ENCODE measurements at regions of chr18 and their contacts with region 1.

Region 1: DNA sequence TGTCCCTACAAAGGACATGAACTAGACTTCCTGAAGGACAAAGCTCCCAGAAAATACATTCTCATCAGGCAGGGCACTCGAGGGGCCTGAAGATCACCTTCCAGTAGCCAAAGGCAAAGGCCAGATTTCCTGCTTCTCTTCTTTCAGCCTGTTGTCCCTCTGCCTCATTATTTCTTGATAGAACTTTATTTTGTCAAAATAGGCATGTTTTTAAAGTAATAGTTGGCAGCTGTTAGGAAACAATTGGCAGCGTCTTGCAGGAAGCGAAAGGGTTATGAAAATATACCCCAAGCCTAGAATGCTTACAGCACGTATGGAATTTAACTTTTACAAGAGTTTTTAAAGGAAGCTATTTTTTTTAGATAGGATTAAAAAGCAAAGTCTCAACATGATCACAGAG is 74.9 kb downstream of the LINC00305 start:
- DNase-seq: no peak
- H3K4me3 ChIP-seq: no peak overlapping the region
- H3K27ac ChIP-seq: no peak overlapping the region
- H3K4me1 ChIP-seq: no peaks in the 10 kb centered on the region
- H3K27me3 ChIP-seq: no peaks in the 10 kb centered on the region
- CTCF ChIP-seq: no peak
- EP300 ChIP-seq: no peak
- POLR2A ChIP-seq: no peak

Region 2: GRCh38 chr18:65322895-65323294 is 1248.9 kb after region 1 on chr18:
- in situ Hi-C with region 1: no loop called
- intact Hi-C with region 1: loop called (anchors 5 kb)
- DNase-seq: no peak
- H3K4me3 ChIP-seq: no peak overlapping the region
- H3K27ac ChIP-seq: no peak overlapping the region
- H3K4me1 ChIP-seq: no peaks in the 10 kb centered on the region
- H3K27me3 ChIP-seq: no peaks in the 10 kb centered on the region
- CTCF ChIP-seq: no peak
- EP300 ChIP-seq: no peak
- POLR2A ChIP-seq: no peak

Region 3: GRCh38 chr18:65869527-65869926 is 1795.6 kb after region 1 on chr18:
- in situ Hi-C with region 1: no loop called
- intact Hi-C with region 1: loop called (anchors 10 kb)
- DNase-seq: no peak
- H3K4me3 ChIP-seq: no peak overlapping the region
- H3K27ac ChIP-seq: no peak overlapping the region
- H3K4me1 ChIP-seq: no peaks in the 10 kb centered on the region
- H3K27me3 ChIP-seq: no peaks in the 10 kb centered on the region
- CTCF ChIP-seq: no peak
- EP300 ChIP-seq: no peak
- POLR2A ChIP-seq: no peak